CD8-positive, alpha-beta T cell (primary cell): ENCODE measurements at regions of chr1 and their contacts with region 1.

Region 1: DNA sequence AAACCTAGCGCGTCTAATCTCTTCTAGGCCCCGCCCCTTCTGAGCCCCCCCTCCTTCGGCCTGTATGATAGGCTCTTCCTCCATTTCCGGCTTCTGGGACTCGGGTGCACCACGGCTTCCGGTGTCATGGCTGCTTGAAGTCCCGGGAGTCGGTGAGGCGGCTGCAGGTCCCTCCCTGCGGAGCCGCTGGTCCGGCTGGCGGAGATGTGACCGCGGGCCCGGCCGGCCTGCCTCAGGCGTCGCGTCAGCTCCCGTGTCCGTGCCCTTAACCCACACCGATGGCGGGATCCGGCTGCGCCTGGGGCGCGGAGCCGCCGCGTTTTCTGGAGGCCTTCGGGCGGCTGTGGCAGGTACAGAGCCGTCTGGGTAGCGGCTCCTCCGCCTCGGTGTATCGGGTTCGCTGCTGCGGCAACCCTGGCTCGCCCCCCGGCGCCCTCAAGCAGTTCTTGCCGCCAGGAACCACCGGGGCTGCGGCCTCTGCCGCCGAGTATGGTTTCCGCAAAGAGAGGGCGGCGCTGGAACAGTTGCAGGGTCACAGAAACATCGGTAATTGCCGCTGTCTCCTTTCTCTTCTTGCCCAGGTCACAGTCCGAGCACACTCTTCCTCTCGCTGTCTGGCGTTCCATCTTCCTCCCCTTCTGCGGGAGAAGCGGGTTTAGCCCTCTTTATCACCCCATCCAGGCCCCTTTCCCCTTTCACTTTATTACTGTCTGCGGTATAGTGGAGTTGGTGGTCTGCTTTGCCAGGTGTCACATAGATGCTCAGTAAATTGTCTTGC is at the start of gene UHMK1:
- DNase-seq: peak; percentile 79 to 95 (median 88)
- ATAC-seq: peak; percentile 97
- H3K4me3 ChIP-seq: peak within 1 kb of the TSS; percentile 73 to 92
- H3K4me3 Mint-ChIP-seq: peak within 1 kb of the TSS; percentile 89
- H3K27ac ChIP-seq: peak within 1 kb of the TSS; percentile 84 to 93
- H3K27ac Mint-ChIP-seq: peak within 1 kb of the TSS; percentile 96
- H3K4me1 ChIP-seq: peaks cover 35% of the 10 kb centered on the region
- H3K4me1 Mint-ChIP-seq: peaks cover 43% of the 10 kb centered on the region
- H3K27me3 ChIP-seq: no peaks in the 10 kb centered on the region
- H3K27me3 Mint-ChIP-seq: no peaks in the 10 kb centered on the region
- CTCF ChIP-seq: no peak
- total RNA-seq, gene UHMK1: 50.5 to 50.9 TPM

Region 2: DNA sequence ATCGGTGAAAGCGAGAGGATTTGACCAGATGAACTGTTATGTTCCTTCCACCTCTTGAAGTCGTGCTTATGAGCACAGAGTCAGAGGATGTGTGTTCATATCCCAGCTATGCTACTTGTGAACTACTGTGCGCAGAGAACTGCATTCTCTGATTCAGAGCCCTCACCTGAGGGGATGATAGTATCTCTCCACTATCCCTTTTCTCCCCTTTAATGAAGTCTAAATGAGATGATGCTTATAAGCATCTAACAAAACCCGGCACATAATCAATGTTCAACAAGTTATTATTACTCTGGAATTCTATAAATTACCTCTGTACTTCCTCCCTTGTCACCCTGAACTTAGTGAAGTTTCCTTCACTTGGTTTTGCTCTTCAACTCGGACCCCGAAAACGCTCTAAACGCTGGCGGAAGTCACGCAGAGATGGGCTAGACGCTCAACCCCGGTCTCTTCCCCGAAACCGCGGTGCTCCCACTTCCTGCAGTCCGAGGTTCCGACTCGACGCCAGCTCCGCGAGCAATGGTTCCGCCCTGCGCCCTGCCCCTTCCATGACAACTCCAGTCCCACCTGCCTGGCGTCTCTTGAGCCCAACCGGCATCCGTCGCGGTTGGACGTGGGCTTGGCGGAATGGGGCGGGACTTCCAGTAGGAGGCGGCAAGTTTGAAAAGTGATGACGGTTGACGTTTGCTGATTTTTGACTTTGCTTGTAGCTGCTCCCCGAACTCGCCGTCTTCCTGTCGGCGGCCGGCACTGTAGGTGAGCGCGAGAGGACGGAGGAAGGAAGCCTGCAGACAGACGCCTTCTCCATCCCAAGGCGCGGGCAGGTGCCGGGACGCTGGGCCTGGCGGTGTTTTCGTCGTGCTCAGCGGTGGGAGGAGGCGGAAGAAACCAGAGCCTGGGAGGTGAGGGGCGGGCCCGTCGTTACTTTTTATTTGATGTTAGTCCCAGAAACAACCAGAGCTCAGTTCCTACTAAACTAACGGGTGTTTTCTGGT is 823.7 kb after region 1 on chr1 and contains the start of gene NUF2:
- CTCF ChIA-PET with region 1: no interaction called
- POLR2A ChIA-PET with region 1: no interaction called
- intact Hi-C with region 1: loop called (anchors 2 kb)
- DNase-seq: peak; percentile 94 to 98 (median 96)
- ATAC-seq: peak; percentile 97
- H3K4me3 ChIP-seq: peak within 1 kb of the TSS; percentile 58 to 80
- H3K4me3 Mint-ChIP-seq: peak within 1 kb of the TSS; percentile 96
- H3K27ac ChIP-seq: peak within 1 kb of the TSS; percentile 49 to 81
- H3K27ac Mint-ChIP-seq: peak within 1 kb of the TSS; percentile 98
- H3K4me1 ChIP-seq: peaks cover 16% of the 10 kb centered on the region
- H3K4me1 Mint-ChIP-seq: peaks cover 24% of the 10 kb centered on the region
- H3K27me3 ChIP-seq: no peaks in the 10 kb centered on the region
- H3K27me3 Mint-ChIP-seq: no peaks in the 10 kb centered on the region
- CTCF ChIP-seq: no peak
- total RNA-seq, gene NUF2: 1.2 to 2.5 TPM